ENCODE measurements at regions of chr7 and their contacts with region 1.

Region 1: DNA sequence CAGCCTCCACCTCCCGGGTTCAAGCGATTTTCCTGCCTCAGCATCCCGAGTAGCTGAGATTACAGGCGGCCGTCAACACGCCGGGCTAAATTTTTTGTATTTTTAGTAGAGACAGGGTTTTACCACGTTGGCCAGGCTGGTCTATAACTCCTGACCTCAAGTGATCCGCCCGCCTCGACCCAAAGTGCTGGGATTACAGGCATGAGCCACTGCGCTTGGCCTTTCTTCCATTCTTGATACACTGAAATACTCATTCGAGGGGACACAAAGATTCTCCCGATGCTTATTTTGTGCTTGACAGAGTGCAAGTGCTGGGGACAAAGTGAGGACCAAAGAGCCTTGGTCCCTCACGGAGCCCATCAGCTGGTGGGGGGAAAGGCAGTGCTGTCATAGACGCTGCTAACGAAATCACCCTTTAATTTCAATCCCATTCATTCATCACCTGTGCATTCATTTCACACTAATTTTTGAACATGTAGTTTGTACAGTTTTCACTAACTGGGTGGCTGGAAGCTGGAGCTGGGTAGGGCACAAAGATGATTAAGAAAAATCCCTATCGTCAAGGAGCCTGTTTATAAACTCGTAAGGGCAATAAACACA is 621 bp upstream of the FAM133B start:
- DNase-seq: peak in 3 of 10 donors; percentile 14 to 42 (median 36)
- H3K4me3 ChIP-seq: peak overlapping the region; percentile 57 to 95 (median 84)
- H3K27ac ChIP-seq: peak overlapping the region in 52 of 59 donors; percentile 76 to 99 (median 93)
- H3K27me3 ChIP-seq: no peaks in the 10 kb centered on the region
- CTCF ChIP-seq: no peak

Region 2: GRCh38 chr7:92528188-92528957 is 62.4 kb before region 1 on chr7 and contains the starts of genes PEX1 and RBM48:
- intact Hi-C with region 1: loop called (anchors 1 kb)
- DNase-seq: peak; percentile 90 to 97 (median 96)
- H3K4me3 ChIP-seq: peak within 1 kb of the TSS; percentile 65 to 100 (median 92)
- H3K27ac ChIP-seq: peak within 1 kb of the TSS; percentile 35 to 96 (median 88)
- H3K27me3 ChIP-seq: no peaks in the 10 kb centered on the region
- CTCF ChIP-seq: peak; percentile 34 to 95 (median 78)
- total RNA-seq, gene PEX1: 15.0 to 36.6 (median 27.1) TPM
- total RNA-seq, gene RBM48: 21.9 to 54.7 (median 35.1) TPM

Region 3: GRCh38 chr7:92547579-92547978 is 43.2 kb before region 1 on chr7:
- intact Hi-C with region 1: no loop called
- DNase-seq: peak in 4 of 10 donors; percentile 12 to 44 (median 28)
- H3K4me3 ChIP-seq: no peak overlapping the region
- H3K27ac ChIP-seq: no peak overlapping the region
- H3K27me3 ChIP-seq: no peaks in the 10 kb centered on the region
- CTCF ChIP-seq: no peak

Region 4: DNA sequence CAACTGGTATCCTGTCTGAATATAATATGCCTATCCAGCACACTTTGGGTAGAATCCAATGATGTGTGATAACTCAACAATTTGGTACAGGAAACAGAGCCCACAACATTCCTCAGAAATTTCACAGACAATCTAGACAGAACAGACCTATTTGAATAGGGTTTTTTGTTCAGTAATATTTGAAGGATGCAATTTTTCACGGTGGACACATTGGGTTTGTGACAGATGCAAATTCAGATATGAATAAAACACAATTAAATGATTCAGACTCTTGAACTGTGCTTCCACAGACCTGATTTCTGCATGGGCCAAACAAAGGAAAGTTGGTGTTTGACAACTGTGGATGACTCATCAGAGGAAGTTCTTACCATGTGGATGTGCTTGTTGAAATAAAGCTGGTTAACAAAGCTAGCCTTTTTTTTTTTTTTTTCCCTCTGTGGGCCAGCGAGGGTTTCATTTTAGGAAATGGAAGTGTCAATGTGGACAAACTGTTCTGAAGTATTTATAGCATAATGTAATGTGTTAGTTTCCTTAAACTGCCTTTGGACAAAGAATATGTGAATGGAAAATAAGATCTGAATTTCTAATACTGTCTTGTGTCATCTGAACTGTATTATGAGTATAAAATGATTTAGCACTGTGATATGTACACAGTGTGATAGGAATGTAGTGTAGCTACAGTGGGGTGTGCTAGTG is 42.5 kb after region 1 on chr7:
- intact Hi-C with region 1: no loop called
- DNase-seq: peak in 1 of 10 donors; percentile 61
- H3K4me3 ChIP-seq: peak overlapping the region in 26 of 59 donors; percentile 1 to 37 (median 16)
- H3K27ac ChIP-seq: peak overlapping the region in 58 of 59 donors; percentile 13 to 87 (median 69)
- H3K27me3 ChIP-seq: no peaks in the 10 kb centered on the region
- CTCF ChIP-seq: peak in 13 of 56 donors; percentile 8 to 32 (median 17)

Measured in dorsolateral prefrontal cortex (tissue), 120 donors.